ENCODE measurements at regions of chr5 and their contacts with region 1.

Region 1: DNA sequence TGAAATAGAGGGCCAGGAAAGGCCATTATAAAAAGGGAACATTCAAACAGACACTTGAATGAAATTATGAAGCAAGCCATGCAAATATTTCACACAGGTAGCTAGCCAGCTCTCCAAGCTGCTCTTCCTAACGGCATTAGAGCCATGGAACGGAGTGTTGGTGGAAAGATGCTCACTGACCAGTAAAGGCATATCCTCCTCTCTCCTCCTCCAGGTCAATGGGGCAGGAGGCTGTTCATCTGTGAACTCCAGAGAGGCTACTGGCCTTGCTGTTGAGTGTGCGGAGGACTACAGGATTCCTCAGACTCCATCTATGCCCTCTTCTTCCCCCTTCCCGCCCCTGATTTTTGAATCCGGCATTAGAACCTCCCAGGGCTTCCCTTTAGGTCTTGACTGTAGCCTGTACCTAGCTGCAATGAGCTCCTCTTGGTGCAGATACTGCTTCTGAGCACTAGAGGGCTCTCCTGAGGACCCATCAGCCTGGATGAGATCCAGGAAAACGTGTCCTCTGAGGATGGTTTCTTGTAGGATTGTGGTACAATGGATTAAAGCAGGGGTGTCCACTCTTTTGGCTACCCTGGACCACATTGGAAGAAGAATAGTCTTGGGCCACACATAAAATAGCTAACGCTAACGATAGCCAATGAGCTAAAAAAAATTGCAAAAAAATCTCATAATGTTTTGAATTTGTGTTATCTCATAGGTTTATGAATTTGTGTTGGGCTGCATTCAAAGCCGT is 162.2 kb downstream of the SREK1 start:
- DNase-seq: peak; percentile 65 to 69 (median 66)
- ATAC-seq: peak; percentile 94
- H3K4me3 ChIP-seq: no peak overlapping the region
- H3K27ac ChIP-seq: no peak overlapping the region
- H3K4me1 ChIP-seq: no peaks in the 10 kb centered on the region; a peak in 2 of 5 replicates
- H3K27me3 ChIP-seq: peaks cover 4 to 13% of the 10 kb centered on the region in 2 experiments; a peak in 3 of 5 replicates
- CTCF ChIP-seq: peak; percentile 78 to 82 (median 79)
- EP300 ChIP-seq: no peak
- POLR2A ChIP-seq: no peak
- RAD21 ChIP-seq: peak; percentile 28 to 63; a peak in 2 of 4 replicates

Region 2: GRCh38 chr5:66171349-66172344 is 134.6 kb before region 1 on chr5:
- CTCF ChIA-PET with region 1: no interaction called
- POLR2A ChIA-PET with region 1: no interaction called
- in situ Hi-C with region 1: no loop called
- intact Hi-C with region 1: loop called (anchors 10 kb)
- DNase-seq: peak; percentile 28 to 50 (median 42)
- ATAC-seq: peak; percentile 68
- H3K4me3 ChIP-seq: no peak overlapping the region
- H3K27ac ChIP-seq: no peak overlapping the region
- H3K4me1 ChIP-seq: no peaks in the 10 kb centered on the region
- H3K27me3 ChIP-seq: no peaks in the 10 kb centered on the region
- CTCF ChIP-seq: peak in 2 of 3 experiments; percentile 19 to 57; a peak in 4 of 6 replicates
- EP300 ChIP-seq: no peak
- POLR2A ChIP-seq: no peak
- RAD21 ChIP-seq: peak in 1 of 2 experiments; percentile 45; a peak in 2 of 4 replicates

Region 3: GRCh38 chr5:66415208-66415607 is 108.9 kb after region 1 on chr5:
- CTCF ChIA-PET with region 1: no interaction called
- POLR2A ChIA-PET with region 1: interaction called, 3 read pairs
- in situ Hi-C with region 1: no loop called
- intact Hi-C with region 1: loop called (anchors 10 kb)
- DNase-seq: no peak
- ATAC-seq: no peak
- H3K4me3 ChIP-seq: no peak overlapping the region
- H3K27ac ChIP-seq: no peak overlapping the region
- H3K4me1 ChIP-seq: no peaks in the 10 kb centered on the region
- H3K27me3 ChIP-seq: no peaks in the 10 kb centered on the region
- CTCF ChIP-seq: no peak
- EP300 ChIP-seq: no peak
- POLR2A ChIP-seq: no peak
- RAD21 ChIP-seq: no peak

Region 4: DNA sequence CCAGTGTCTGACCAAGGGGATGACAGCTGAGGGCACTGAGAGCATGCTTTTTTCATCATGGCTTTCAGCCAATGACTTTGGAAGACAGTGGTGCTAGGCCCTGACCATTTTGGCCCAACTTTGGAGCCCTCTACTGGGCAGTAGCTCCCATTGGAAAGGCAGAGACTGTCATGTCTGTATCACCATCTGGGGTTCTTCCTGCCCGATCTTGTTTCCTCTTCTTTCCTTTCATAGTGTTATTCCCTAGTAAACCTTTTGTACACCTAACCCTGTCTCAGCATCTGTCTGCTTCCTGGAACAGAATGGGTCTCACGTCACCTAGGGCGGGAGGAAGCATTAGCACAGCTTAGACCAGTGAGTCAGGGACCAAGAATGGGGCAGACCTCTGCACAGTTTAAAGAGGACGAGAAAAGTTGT is 192.5 kb after region 1 on chr5:
- CTCF ChIA-PET with region 1: no interaction called
- POLR2A ChIA-PET with region 1: no interaction called
- in situ Hi-C with region 1: no loop called
- intact Hi-C with region 1: loop called (anchors 2 kb)
- DNase-seq: peak in 2 of 4 experiments; percentile 15 to 24
- ATAC-seq: peak; percentile 83
- H3K4me3 ChIP-seq: no peak overlapping the region
- H3K27ac ChIP-seq: no peak overlapping the region
- H3K4me1 ChIP-seq: no peaks in the 10 kb centered on the region
- H3K27me3 ChIP-seq: no peaks in the 10 kb centered on the region
- CTCF ChIP-seq: peak; percentile 31 to 49 (median 43); a peak in 5 of 6 replicates
- EP300 ChIP-seq: no peak
- POLR2A ChIP-seq: no peak
- RAD21 ChIP-seq: peak in 1 of 2 experiments; percentile 31; a peak in 2 of 4 replicates

Region 5: DNA sequence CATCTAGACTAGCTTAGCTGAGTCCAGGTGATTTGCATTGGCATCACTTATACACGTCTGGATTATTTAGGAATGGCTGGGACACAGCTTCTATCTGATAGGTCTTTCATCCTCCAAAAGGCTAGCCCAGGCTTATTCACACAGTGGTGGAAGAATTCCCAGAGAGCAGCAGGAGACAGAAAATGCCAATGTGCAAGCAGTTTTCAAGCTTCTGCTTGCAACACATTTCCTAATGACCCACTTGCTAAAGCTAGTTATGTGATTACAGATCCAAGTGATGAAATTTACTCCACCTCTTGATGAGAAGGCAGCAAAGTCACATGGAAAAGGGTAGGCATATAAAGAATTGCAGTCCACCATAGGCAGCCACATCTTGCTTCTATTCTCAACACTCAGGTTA is 245.7 kb after region 1 on chr5:
- CTCF ChIA-PET with region 1: no interaction called
- POLR2A ChIA-PET with region 1: no interaction called
- in situ Hi-C with region 1: no loop called
- intact Hi-C with region 1: no loop called
- DNase-seq: no peak
- ATAC-seq: no peak
- H3K4me3 ChIP-seq: no peak overlapping the region
- H3K27ac ChIP-seq: no peak overlapping the region
- H3K4me1 ChIP-seq: no peaks in the 10 kb centered on the region
- H3K27me3 ChIP-seq: no peaks in the 10 kb centered on the region
- CTCF ChIP-seq: no peak
- EP300 ChIP-seq: no peak
- POLR2A ChIP-seq: no peak
- RAD21 ChIP-seq: no peak

Region 6: DNA sequence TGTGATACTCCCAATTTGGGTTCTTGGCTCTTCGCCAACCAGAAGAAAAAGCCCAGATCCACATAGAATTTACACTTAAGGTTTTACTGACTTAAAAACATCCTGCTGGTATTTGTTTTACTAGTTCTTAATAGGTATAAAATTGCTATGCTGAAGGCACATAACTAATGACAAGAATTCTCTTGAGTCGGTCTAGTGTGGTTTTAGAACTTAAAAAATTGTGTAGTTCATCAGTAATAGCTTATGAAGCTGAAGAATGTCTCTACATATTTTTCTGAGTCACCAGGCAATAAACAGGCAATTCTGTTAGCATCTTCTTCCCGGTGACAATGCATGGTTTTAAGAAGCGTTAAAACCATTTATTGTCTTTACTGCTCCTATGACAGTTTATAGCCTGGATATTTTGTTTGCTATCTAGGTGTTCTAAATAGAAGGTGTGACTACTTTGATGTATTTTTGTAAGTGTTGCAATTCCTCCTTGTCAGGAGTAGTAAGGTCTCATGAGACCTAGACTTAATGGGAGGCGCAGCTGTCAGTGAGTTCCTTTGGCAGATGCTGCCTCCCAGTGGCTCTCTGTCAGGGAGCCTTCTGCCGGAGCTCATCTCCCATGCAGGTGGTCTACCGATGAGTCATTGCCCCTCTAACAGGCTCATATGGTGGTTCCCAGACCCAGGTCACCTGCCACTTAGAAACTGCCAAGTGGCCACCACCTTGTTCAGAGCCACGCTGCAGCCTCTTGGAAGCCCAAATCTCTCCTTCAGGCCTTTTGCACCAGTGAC is 463.8 kb after region 1 on chr5:
- CTCF ChIA-PET with region 1: interaction called, 7 read pairs
- POLR2A ChIA-PET with region 1: no interaction called
- in situ Hi-C with region 1: no loop called
- intact Hi-C with region 1: loop called (anchors 5 kb)
- DNase-seq: peak in 1 of 4 experiments; percentile 23
- ATAC-seq: peak; percentile 68; the same call in 2 of the 3 replicates
- H3K4me3 ChIP-seq: no peak overlapping the region
- H3K27ac ChIP-seq: no peak overlapping the region
- H3K4me1 ChIP-seq: no peaks in the 10 kb centered on the region
- H3K27me3 ChIP-seq: peaks cover 0 to 4% of the 10 kb centered on the region in 2 experiments; a peak in 2 of 5 replicates
- CTCF ChIP-seq: peak; percentile 19 to 44 (median 41); a peak in 4 of 6 replicates
- EP300 ChIP-seq: no peak
- POLR2A ChIP-seq: no peak
- RAD21 ChIP-seq: peak in 1 of 2 experiments; percentile 52; a peak in 2 of 4 replicates

Region 7: GRCh38 chr5:67209142-67209771 is 903.0 kb after region 1 on chr5:
- CTCF ChIA-PET with region 1: interaction called, 3 read pairs
- POLR2A ChIA-PET with region 1: no interaction called
- in situ Hi-C with region 1: loop called (anchors 10 kb)
- intact Hi-C with region 1: loop called (anchors 2 kb)
- DNase-seq: peak; percentile 60 to 76 (median 68)
- ATAC-seq: peak; percentile 88
- H3K4me3 ChIP-seq: no peak overlapping the region
- H3K27ac ChIP-seq: no peak overlapping the region
- H3K4me1 ChIP-seq: no peaks in the 10 kb centered on the region
- H3K27me3 ChIP-seq: peaks cover 8 to 25% of the 10 kb centered on the region in 2 experiments
- CTCF ChIP-seq: peak; percentile 71 to 85 (median 75)
- EP300 ChIP-seq: no peak
- POLR2A ChIP-seq: no peak
- RAD21 ChIP-seq: peak; percentile 78 to 89

Measured in K562 (cell line).